Naive thymus-derived CD4-positive, alpha-beta T cell (primary cell): ENCODE measurements at regions of chr17 and their contacts with region 1.

Region 1: DNA sequence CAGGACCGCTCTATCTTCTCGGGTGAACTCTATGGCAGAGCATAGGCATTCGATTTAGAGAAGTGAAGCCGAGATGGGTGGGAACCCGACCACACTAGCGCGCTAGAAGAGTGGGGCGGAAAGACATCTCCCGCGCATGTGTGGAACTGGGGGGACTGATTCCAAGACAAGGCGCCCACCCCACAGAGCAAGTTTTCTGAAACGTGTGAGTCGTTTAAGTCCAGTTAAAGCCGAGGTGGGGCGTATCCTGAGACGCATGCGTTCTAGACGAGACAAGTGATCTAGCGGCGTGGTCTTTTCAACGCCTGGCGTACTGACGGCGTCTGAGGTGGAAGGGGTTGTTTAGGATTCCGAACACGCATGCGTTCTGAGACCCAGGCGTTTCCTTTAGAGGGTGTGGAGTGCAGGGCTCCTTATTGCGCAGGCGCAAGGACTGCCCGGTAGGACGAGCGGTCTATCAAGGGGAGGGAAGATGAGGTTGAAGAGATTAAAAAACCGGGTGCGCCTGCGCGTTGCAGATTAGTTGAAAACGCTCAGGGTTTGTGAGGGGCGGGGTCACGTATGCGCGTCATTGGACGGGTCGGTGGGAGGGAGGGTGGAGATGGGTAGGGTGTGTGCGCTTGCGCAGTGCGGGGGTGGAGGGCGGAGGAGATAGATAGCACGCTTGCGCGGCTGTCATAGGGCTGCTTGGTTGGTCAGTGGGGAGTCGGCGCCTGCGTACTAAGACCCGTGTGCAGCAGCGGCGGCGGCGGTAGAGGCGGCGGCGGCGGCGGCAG is at the start of gene EIF5A:
- DNase-seq: peak; percentile 99 to 100 (median 100)
- ATAC-seq: peak; percentile 79
- H3K4me3 ChIP-seq: peak within 1 kb of the TSS; percentile 78
- H3K4me3 Mint-ChIP-seq: peak within 1 kb of the TSS; percentile 90 to 99 (median 95)
- H3K27ac ChIP-seq: peak within 1 kb of the TSS; percentile 100
- H3K27ac Mint-ChIP-seq: peak within 1 kb of the TSS; percentile 98 to 100 (median 99)
- H3K4me1 ChIP-seq: peaks cover 19 to 20% of the 10 kb centered on the region in 2 donors
- H3K4me1 Mint-ChIP-seq: peaks cover 28 to 44% (median 35%) of the 10 kb centered on the region in 7 donors
- H3K27me3 ChIP-seq: no peaks in the 10 kb centered on the region
- H3K27me3 Mint-ChIP-seq: peaks cover 0 to 9% (median 0%) of the 10 kb centered on the region in 5 donors
- total RNA-seq, gene EIF5A: 237 to 666 (median 453) TPM

Region 2: GRCh38 chr17:7035591-7036368 is 271.3 kb before region 1 on chr17 and contains the start of gene SLC16A13:
- CTCF ChIA-PET with region 1: no interaction called
- POLR2A ChIA-PET with region 1: interaction called, 3 read pairs
- intact Hi-C with region 1: loop called (anchors 5 kb)
- DNase-seq: peak; percentile 87 to 99 (median 97)
- ATAC-seq: peak; percentile 95
- H3K4me3 ChIP-seq: peak within 1 kb of the TSS; percentile 67
- H3K4me3 Mint-ChIP-seq: peak within 1 kb of the TSS; percentile 89 to 95 (median 93)
- H3K27ac ChIP-seq: peak within 1 kb of the TSS; percentile 94
- H3K27ac Mint-ChIP-seq: peak within 1 kb of the TSS; percentile 96 to 99 (median 98)
- H3K4me1 ChIP-seq: peaks cover 26 to 36% of the 10 kb centered on the region in 2 donors
- H3K4me1 Mint-ChIP-seq: peaks cover 39 to 80% (median 58%) of the 10 kb centered on the region in 7 donors
- H3K27me3 ChIP-seq: no peaks in the 10 kb centered on the region
- H3K27me3 Mint-ChIP-seq: no peaks in the 10 kb centered on the region
- total RNA-seq, gene SLC16A13: 3.4 to 20.9 (median 15.0) TPM

Region 3: DNA sequence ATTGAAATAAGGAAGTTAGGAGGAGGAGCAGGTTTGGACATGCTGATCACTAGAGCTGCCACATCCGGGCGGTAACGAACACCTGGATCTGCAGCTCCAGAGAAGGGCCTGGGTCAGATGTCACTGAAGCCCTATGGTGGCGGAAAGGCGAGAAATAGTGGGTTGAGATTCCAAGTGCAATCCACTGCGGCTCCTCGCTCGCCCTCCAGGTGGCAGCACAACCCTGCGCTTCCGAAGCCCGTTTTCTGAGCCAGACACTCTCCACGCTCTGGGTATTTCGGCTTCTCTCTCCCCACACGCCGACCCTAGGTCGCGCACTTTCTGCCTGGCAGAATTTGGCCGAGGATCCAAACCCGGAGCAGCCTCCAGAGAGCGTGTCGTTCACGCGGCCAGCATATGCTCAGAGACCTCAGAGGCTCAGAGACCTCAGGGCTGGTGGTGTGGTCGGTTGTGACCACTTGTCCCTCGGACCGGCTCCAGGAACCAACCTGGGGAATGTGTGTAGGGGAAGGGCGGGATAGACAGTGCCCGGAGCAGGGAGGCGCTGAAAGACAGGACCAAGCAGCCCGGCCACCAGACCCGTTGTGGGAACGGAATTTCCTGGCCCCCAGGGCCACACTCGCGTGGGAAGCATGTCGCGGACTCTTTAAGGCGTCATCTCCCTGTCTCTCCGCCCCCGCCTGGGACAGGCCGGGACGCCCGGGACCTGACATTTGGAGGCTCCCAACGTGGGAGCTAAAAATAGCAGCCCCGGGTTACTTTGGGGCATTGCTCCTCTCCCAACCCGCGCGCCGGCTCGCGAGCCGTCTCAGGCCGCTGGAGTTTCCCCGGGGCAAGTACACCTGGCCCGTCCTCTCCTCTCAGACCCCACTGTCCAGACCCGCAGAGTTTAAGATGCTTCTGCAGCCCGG is 26.3 kb before region 1 on chr17:
- CTCF ChIA-PET with region 1: interaction called, 3 read pairs
- POLR2A ChIA-PET with region 1: interaction called, 4 read pairs
- intact Hi-C with region 1: loop called in 1 of 2 experiments (anchors 1 kb)
- DNase-seq: peak; percentile 76 to 88 (median 85)
- ATAC-seq: peak; percentile 95
- H3K4me3 ChIP-seq: peak overlapping the region; percentile 66
- H3K4me3 Mint-ChIP-seq: peak overlapping the region; percentile 77 to 87 (median 84)
- H3K27ac ChIP-seq: no peak overlapping the region
- H3K27ac Mint-ChIP-seq: peak overlapping the region in 7 of 9 donors; percentile 6 to 88 (median 51)
- H3K4me1 ChIP-seq: peaks cover 11 to 23% of the 10 kb centered on the region in 2 donors
- H3K4me1 Mint-ChIP-seq: peaks cover 14 to 31% (median 21%) of the 10 kb centered on the region in 7 donors
- H3K27me3 ChIP-seq: no peaks in the 10 kb centered on the region
- H3K27me3 Mint-ChIP-seq: peaks cover 6 to 44% (median 17%) of the 10 kb centered on the region in 5 donors

Region 4: GRCh38 chr17:7329374-7329996 is 22.4 kb after region 1 on chr17:
- CTCF ChIA-PET with region 1: interaction called, 7 read pairs
- POLR2A ChIA-PET with region 1: interaction called, 336 read pairs
- intact Hi-C with region 1: loop called (anchors 1 kb)
- DNase-seq: peak; percentile 84 to 98 (median 98)
- ATAC-seq: peak; percentile 91
- H3K4me3 ChIP-seq: peak overlapping the region; percentile 95
- H3K4me3 Mint-ChIP-seq: peak overlapping the region; percentile 89 to 100 (median 96)
- H3K27ac ChIP-seq: peak overlapping the region; percentile 88
- H3K27ac Mint-ChIP-seq: peak overlapping the region; percentile 93 to 99 (median 97)
- H3K4me1 ChIP-seq: peaks cover 15 to 36% of the 10 kb centered on the region in 2 donors
- H3K4me1 Mint-ChIP-seq: peaks cover 29 to 61% (median 44%) of the 10 kb centered on the region in 7 donors
- H3K27me3 ChIP-seq: no peaks in the 10 kb centered on the region
- H3K27me3 Mint-ChIP-seq: no peaks in the 10 kb centered on the region

Region 5: GRCh38 chr17:7403977-7404736 is 97.1 kb after region 1 on chr17 and contains the start of gene TMEM256:
- CTCF ChIA-PET with region 1: no interaction called
- POLR2A ChIA-PET with region 1: no interaction called
- intact Hi-C with region 1: loop called (anchors 1 to 5 kb)
- DNase-seq: peak; percentile 79 to 96 (median 91)
- ATAC-seq: peak; percentile 93
- H3K4me3 ChIP-seq: peak within 1 kb of the TSS; percentile 95
- H3K4me3 Mint-ChIP-seq: peak within 1 kb of the TSS; percentile 87 to 98 (median 96)
- H3K27ac ChIP-seq: peak within 1 kb of the TSS; percentile 78
- H3K27ac Mint-ChIP-seq: peak within 1 kb of the TSS; percentile 91 to 100 (median 96)
- H3K4me1 ChIP-seq: peaks cover 9 to 10% of the 10 kb centered on the region in 2 donors
- H3K4me1 Mint-ChIP-seq: peaks cover 8 to 25% (median 21%) of the 10 kb centered on the region in 7 donors
- H3K27me3 ChIP-seq: no peaks in the 10 kb centered on the region
- H3K27me3 Mint-ChIP-seq: peaks cover 0 to 23% (median 0%) of the 10 kb centered on the region in 5 donors
- total RNA-seq, gene TMEM256: 31.5 to 58.5 (median 48.2) TPM

Region 6: DNA sequence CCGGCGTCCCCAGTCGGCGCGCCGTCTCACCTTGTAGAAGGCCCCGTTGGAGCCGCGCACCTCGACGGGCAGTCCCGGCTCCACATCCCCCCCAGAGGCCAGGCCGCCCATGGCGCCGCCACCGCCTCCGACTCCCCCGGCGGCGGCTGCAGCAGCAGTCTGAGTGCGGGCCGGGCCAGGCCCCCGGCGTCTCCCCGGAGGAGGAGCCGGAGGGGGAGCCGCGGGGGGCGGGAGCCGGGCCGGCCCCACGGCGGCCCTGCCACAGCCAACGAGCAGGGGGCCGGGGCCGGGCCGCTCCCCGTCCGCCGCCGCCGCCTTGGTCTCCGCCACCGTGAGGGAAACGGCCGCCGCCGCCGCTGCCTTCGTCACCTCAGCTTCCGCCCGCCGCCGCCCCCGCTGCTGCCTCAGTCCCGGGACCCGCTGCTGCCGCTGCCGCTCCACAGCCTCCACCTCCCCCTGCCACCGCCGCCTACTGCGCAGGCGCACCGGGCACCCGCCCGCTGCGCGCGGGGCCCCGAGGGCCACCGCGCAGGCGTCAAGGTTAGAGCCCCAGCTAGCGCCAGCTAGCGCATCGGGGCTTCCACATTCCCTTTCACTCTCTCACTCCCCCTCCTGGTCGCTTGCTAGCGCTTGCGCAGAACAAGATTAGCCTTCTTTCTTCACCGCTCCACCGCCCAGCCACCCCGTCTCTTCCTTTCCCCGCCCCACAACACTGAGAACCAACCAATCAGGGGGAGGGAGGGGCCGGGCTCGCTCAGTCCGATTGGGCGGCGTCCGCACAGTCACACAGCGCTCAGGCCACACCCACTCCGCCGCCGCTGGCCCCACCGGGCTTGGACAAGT is 307.5 kb after region 1 on chr17 and contains the start of gene FXR2:
- CTCF ChIA-PET with region 1: no interaction called
- POLR2A ChIA-PET with region 1: no interaction called
- intact Hi-C with region 1: loop called in 1 of 2 experiments (anchors 1 kb)
- DNase-seq: peak; percentile 96 to 100 (median 99)
- ATAC-seq: peak; percentile 93
- H3K4me3 ChIP-seq: peak within 1 kb of the TSS; percentile 86
- H3K4me3 Mint-ChIP-seq: peak within 1 kb of the TSS; percentile 85 to 97 (median 92)
- H3K27ac ChIP-seq: peak within 1 kb of the TSS; percentile 81
- H3K27ac Mint-ChIP-seq: peak within 1 kb of the TSS; percentile 89 to 99 (median 97)
- H3K4me1 ChIP-seq: peaks cover 16 to 27% of the 10 kb centered on the region in 2 donors
- H3K4me1 Mint-ChIP-seq: peaks cover 29 to 47% (median 40%) of the 10 kb centered on the region in 7 donors
- H3K27me3 ChIP-seq: no peaks in the 10 kb centered on the region
- H3K27me3 Mint-ChIP-seq: peaks cover 0 to 6% (median 0%) of the 10 kb centered on the region in 5 donors
- total RNA-seq, gene FXR2: 24.6 to 46.9 (median 34.0) TPM